ENCODE measurements at regions of chr10 and their contacts with region 1.

Region 1: DNA sequence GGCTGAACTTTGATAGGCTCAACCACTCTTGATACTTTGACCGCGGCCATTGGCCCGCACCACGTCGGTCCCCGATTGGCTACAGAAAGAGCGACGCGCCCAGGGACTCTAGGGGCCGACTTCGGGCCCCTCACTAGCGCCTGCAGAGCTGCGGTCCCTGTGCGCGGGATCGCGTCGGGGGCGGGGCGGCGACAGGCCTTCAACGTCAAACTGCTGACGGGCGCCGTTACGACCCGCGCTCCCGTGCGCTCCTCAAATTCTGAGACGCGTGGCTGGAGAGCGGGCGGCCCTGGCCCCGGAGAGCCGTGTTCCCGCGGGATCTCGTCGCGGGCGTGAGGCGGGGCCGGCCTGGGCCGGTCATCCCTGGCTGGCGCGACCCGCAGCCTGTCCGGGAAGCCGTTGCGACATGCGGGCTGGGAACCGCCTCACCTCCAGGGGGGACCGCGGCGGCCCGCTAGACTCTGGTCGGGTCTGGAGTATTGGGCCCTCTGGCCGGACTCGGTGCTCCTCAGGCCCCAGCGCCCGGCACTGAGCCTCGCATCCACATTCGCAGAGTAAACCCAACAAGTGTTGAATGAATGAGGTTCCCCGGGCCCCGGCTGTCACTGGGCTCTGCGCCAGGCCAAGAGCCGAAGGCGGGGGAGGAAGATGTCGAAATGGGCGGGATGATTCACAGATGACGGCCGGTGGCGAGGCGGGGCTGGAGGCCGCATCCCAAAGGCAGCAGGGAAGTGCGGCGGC is 644 bp upstream of the SLC25A28 start:
- DNase-seq: peak in 1 of 2 donors; percentile 97
- H3K4me3 ChIP-seq: peak overlapping the region; percentile 94 to 98
- H3K27ac ChIP-seq: peak overlapping the region; percentile 98
- H3K4me1 ChIP-seq: peaks cover 48% of the 10 kb centered on the region
- H3K27me3 ChIP-seq: no peaks in the 10 kb centered on the region
- CTCF ChIP-seq: no peak
- POLR2A ChIP-seq: peak in 1 of 2 donors; percentile 87

Region 2: DNA sequence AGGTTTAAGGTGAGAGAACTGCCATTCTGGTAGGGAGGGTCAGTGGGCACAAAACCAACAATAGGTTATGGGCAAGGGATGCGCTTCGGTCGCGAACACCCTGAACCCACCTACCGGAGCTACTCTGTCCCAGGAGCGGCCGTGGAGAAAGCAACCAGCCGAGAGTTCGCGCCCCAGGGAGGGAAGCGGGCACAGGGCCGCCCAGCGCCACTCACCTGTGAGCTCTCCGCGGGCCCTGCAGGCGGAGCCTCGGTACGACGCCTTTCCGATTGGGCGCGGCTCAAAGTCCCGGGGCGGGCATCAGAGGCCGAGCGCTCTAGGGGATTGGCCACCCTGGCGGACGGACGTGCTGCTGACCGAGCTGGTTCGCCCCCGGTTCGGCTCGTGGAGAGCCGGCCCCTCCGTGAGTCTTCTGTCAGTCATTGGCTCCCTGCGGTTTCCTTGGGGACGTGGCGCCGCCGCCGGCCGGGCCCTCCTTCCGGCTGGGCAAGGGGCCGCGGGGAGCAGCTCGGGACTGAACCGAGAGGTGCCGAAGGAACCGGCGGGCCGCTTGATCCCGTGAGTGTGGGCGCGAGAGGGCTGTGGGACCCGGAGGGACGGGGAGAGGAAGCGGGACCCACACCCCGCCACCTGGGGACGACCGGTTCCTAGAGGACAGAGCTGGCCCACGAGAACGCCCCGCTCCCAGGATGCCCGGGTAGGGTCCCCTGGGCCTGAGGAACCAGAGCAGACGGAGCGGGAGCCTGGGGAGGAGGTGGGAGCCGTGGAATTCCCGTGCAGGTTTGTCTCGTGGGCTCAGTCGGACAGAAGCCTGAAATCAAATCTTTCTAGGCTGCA is 38.4 kb after region 1 on chr10 and contains the start of gene ENTPD7:
- intact Hi-C with region 1: loop called (anchors 5 kb)
- DNase-seq: peak in 1 of 2 donors; percentile 92
- H3K4me3 ChIP-seq: peak within 1 kb of the TSS; percentile 84 to 90
- H3K27ac ChIP-seq: peak within 1 kb of the TSS; percentile 68
- H3K4me1 ChIP-seq: peaks cover 32% of the 10 kb centered on the region
- H3K27me3 ChIP-seq: no peaks in the 10 kb centered on the region
- CTCF ChIP-seq: peak in 2 of 3 experiments; percentile 42 to 52
- POLR2A ChIP-seq: no peak
- total RNA-seq, gene ENTPD7: 6.6 TPM